ENCODE measurements at regions of chr7 and their contacts with region 1.

Region 1: GRCh38 chr7:33109005-33109757 is at the start of gene RP9:
- DNase-seq: peak; percentile 87
- ATAC-seq: peak; percentile 93
- H3K4me3 Mint-ChIP-seq: peak within 1 kb of the TSS; percentile 88
- H3K27ac Mint-ChIP-seq: peak within 1 kb of the TSS; percentile 76
- H3K4me1 Mint-ChIP-seq: peaks cover 32% of the 10 kb centered on the region
- H3K27me3 Mint-ChIP-seq: peaks cover 5% of the 10 kb centered on the region
- total RNA-seq, gene RP9: 17.2 to 19.2 TPM

Region 2: GRCh38 chr7:32694182-32694581 is 415.0 kb before region 1 on chr7:
- CTCF ChIA-PET with region 1: no interaction called
- POLR2A ChIA-PET with region 1: no interaction called
- intact Hi-C with region 1: loop called (anchors 2 to 5 kb)
- DNase-seq: no peak
- ATAC-seq: no peak
- H3K4me3 Mint-ChIP-seq: no peak overlapping the region
- H3K27ac Mint-ChIP-seq: no peak overlapping the region
- H3K4me1 Mint-ChIP-seq: peaks cover 6% of the 10 kb centered on the region
- H3K27me3 Mint-ChIP-seq: peaks cover 3% of the 10 kb centered on the region

Region 3: DNA sequence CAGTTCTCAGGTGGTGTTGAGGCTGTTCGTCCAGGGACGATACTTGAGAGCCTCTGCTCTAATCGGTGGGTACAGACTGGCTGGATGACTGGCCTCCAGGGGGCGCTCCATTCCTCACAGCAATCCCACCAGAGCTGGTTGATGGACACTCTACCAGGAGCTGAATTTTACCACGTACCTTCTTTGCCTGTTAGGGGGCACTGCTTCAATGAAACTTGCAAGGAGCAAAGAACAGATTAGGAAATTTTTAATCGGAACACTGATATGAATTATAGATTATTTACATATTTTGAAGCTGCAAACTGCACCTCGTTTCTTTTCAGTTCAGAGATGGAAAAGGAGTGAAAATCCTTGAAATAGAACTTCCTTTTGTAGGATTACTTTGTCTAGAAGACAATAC is 262.5 kb before region 1 on chr7:
- CTCF ChIA-PET with region 1: interaction called, 41 read pairs
- POLR2A ChIA-PET with region 1: no interaction called
- intact Hi-C with region 1: loop called (anchors 1 kb)
- DNase-seq: peak; percentile 95
- ATAC-seq: peak; percentile 100
- H3K4me3 Mint-ChIP-seq: no peak overlapping the region
- H3K27ac Mint-ChIP-seq: no peak overlapping the region
- H3K4me1 Mint-ChIP-seq: peaks cover 7% of the 10 kb centered on the region
- H3K27me3 Mint-ChIP-seq: peaks cover 19% of the 10 kb centered on the region

Region 4: GRCh38 chr7:33035776-33036175 is 73.4 kb before region 1 on chr7:
- CTCF ChIA-PET with region 1: interaction called, 5 read pairs
- POLR2A ChIA-PET with region 1: no interaction called
- intact Hi-C with region 1: loop called (anchors 2 kb)
- DNase-seq: no peak
- ATAC-seq: no peak
- H3K4me3 Mint-ChIP-seq: no peak overlapping the region
- H3K27ac Mint-ChIP-seq: no peak overlapping the region
- H3K4me1 Mint-ChIP-seq: peaks cover 51% of the 10 kb centered on the region
- H3K27me3 Mint-ChIP-seq: no peaks in the 10 kb centered on the region

Region 5: GRCh38 chr7:33062782-33063443 is 46.3 kb before region 1 on chr7:
- CTCF ChIA-PET with region 1: interaction called, 30 read pairs
- POLR2A ChIA-PET with region 1: no interaction called
- intact Hi-C with region 1: loop called (anchors 1 kb)
- DNase-seq: peak; percentile 95
- ATAC-seq: peak; percentile 96
- H3K4me3 Mint-ChIP-seq: peak overlapping the region; percentile 95
- H3K27ac Mint-ChIP-seq: peak overlapping the region; percentile 93
- H3K4me1 Mint-ChIP-seq: peaks cover 32% of the 10 kb centered on the region
- H3K27me3 Mint-ChIP-seq: no peaks in the 10 kb centered on the region